Activated naive CD4-positive, alpha-beta T cell treated with anti-CD3 and anti-CD28 coated beads for 36 hours (primary cell): ENCODE measurements at regions of chr22 and their contacts with region 1.

Region 1: DNA sequence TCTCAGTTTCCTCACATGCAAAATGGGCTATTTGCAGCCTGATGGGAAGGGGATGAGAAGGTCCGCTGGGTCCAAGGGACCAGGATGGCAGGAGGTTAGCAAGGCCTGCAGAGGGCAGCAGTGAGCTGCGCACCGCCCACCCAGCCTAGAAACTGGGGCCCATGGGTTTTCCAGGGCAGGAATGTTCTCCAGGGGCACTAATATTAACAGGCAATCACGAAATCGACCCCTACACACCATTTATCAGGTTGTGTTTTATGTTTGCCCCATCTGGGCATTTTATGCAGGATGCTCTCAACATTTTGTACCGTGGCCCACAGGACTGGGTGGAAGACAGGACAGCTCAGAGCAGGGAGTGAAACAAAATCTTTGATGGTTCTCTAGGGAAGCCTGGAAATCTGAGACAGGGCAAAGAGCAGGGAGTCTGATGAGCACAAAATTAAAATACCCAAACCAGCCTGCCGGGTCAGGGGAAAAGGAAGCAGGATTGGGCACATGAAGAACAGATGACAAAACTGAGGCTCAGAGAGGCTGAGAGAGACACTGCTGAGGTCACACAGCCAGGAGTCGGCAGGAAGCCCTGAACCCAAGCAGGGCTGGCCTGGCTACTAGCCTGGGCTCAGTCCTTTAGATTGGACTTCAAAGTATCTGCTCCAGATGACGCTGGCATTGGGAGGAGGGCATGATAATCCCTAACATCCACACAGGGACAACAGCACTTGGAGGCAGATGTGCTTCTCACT is 1.6 kb upstream of the BCR start:
- DNase-seq: peak; percentile 67
- H3K4me3 Mint-ChIP-seq: peak overlapping the region; percentile 24
- H3K27ac Mint-ChIP-seq: peak overlapping the region; percentile 53
- H3K4me1 Mint-ChIP-seq: peaks cover 43% of the 10 kb centered on the region
- H3K27me3 Mint-ChIP-seq: no peaks in the 10 kb centered on the region

Region 2: GRCh38 chr22:23144932-23145873 is 33.5 kb before region 1 on chr22 and contains the start of gene RAB36:
- CTCF ChIA-PET with region 1: interaction called, 7 read pairs
- intact Hi-C with region 1: loop called (anchors 1 kb)
- DNase-seq: peak; percentile 82
- H3K4me3 Mint-ChIP-seq: peak within 1 kb of the TSS; percentile 63
- H3K27ac Mint-ChIP-seq: no peak within 1 kb of the TSS
- H3K4me1 Mint-ChIP-seq: peaks cover 44% of the 10 kb centered on the region
- H3K27me3 Mint-ChIP-seq: no peaks in the 10 kb centered on the region
- total RNA-seq, gene RAB36: not detected

Region 3: GRCh38 chr22:23240639-23241389 is 62.1 kb after region 1 on chr22:
- CTCF ChIA-PET with region 1: interaction called, 14 read pairs
- intact Hi-C with region 1: loop called (anchors 1 kb)
- DNase-seq: peak; percentile 79
- H3K4me3 Mint-ChIP-seq: no peak overlapping the region
- H3K27ac Mint-ChIP-seq: peak overlapping the region; percentile 73
- H3K4me1 Mint-ChIP-seq: peaks cover 93% of the 10 kb centered on the region
- H3K27me3 Mint-ChIP-seq: no peaks in the 10 kb centered on the region

Region 4: GRCh38 chr22:23281406-23282088 is 102.9 kb after region 1 on chr22:
- CTCF ChIA-PET with region 1: interaction called, 167 read pairs
- intact Hi-C with region 1: loop called (anchors 1 kb)
- DNase-seq: peak; percentile 91
- H3K4me3 Mint-ChIP-seq: no peak overlapping the region
- H3K27ac Mint-ChIP-seq: no peak overlapping the region
- H3K4me1 Mint-ChIP-seq: peaks cover 20% of the 10 kb centered on the region
- H3K27me3 Mint-ChIP-seq: no peaks in the 10 kb centered on the region

Region 5: GRCh38 chr22:23376256-23376655 is 197.6 kb after region 1 on chr22:
- CTCF ChIA-PET with region 1: interaction called, 10 read pairs
- intact Hi-C with region 1: no loop called
- DNase-seq: peak; percentile 72
- H3K4me3 Mint-ChIP-seq: no peak overlapping the region
- H3K27ac Mint-ChIP-seq: no peak overlapping the region
- H3K4me1 Mint-ChIP-seq: no peaks in the 10 kb centered on the region
- H3K27me3 Mint-ChIP-seq: peaks cover 2% of the 10 kb centered on the region

Region 6: GRCh38 chr22:23539135-23539838 is 360.6 kb after region 1 on chr22:
- CTCF ChIA-PET with region 1: no interaction called
- intact Hi-C with region 1: loop called (anchors 10 kb)
- DNase-seq: peak; percentile 90
- H3K4me3 Mint-ChIP-seq: peak overlapping the region; percentile 22
- H3K27ac Mint-ChIP-seq: no peak overlapping the region
- H3K4me1 Mint-ChIP-seq: peaks cover 9% of the 10 kb centered on the region
- H3K27me3 Mint-ChIP-seq: no peaks in the 10 kb centered on the region